ENCODE measurements at regions of chr16 and their contacts with region 1.

Region 1: GRCh38 chr16:69310653-69311532 is at the start of gene VPS4A:
- DNase-seq: peak; percentile 97
- ATAC-seq: peak; percentile 98
- H3K4me3 ChIP-seq: peak within 1 kb of the TSS; percentile 62 to 89 (median 67)
- H3K4me3 Mint-ChIP-seq: peak within 1 kb of the TSS; percentile 99
- H3K27ac ChIP-seq: peak within 1 kb of the TSS; percentile 75 to 84
- H3K27ac Mint-ChIP-seq: peak within 1 kb of the TSS; percentile 94
- H3K4me1 ChIP-seq: peaks cover 10 to 23% of the 10 kb centered on the region in 2 donors
- H3K4me1 Mint-ChIP-seq: peaks cover 24% of the 10 kb centered on the region
- H3K27me3 ChIP-seq: no peaks in the 10 kb centered on the region
- H3K27me3 Mint-ChIP-seq: no peaks in the 10 kb centered on the region
- CTCF ChIP-seq: peak; percentile 86
- total RNA-seq, gene VPS4A: 41.4 and 43.8 TPM in 2 replicates

Region 2: GRCh38 chr16:68538880-68539701 is 771.8 kb before region 1 on chr16 and contains the start of gene ZFP90:
- CTCF ChIA-PET with region 1: no interaction called
- POLR2A ChIA-PET with region 1: no interaction called
- intact Hi-C with region 1: loop called (anchors 10 kb)
- DNase-seq: peak; percentile 91
- ATAC-seq: peak; percentile 96
- H3K4me3 ChIP-seq: peak within 1 kb of the TSS; percentile 67 to 97 (median 90)
- H3K4me3 Mint-ChIP-seq: peak within 1 kb of the TSS; percentile 95
- H3K27ac ChIP-seq: peak within 1 kb of the TSS; percentile 80 to 82
- H3K27ac Mint-ChIP-seq: peak within 1 kb of the TSS; percentile 97
- H3K4me1 ChIP-seq: peaks cover 8 to 16% of the 10 kb centered on the region in 2 donors
- H3K4me1 Mint-ChIP-seq: peaks cover 15% of the 10 kb centered on the region
- H3K27me3 ChIP-seq: no peaks in the 10 kb centered on the region
- H3K27me3 Mint-ChIP-seq: no peaks in the 10 kb centered on the region
- CTCF ChIP-seq: no peak
- total RNA-seq, gene ZFP90: 30.7 and 36.0 TPM in 2 replicates

Region 3: DNA sequence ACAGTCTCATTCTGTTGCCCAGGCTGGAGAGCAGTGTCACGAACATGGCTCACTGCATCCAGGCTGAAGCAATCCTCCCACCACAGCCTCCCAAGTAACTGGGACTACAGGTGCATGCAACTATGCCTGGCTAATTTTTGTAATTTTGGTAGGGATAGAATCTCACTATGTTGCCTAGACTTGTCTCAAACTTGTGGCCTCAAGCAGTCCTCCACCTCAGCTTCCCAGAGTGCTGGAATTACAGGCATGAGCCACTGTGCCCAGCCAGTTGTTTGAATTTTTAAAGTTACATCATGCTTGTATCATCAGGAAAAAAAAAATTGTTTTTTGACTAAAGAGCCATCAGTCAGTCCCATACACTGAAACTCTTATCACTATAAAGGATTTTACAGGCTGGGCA is 16.8 kb before region 1 on chr16:
- CTCF ChIA-PET with region 1: no interaction called
- POLR2A ChIA-PET with region 1: no interaction called
- intact Hi-C with region 1: no loop called
- DNase-seq: no peak
- ATAC-seq: no peak
- H3K4me3 ChIP-seq: no peak overlapping the region
- H3K4me3 Mint-ChIP-seq: no peak overlapping the region
- H3K27ac ChIP-seq: no peak overlapping the region
- H3K27ac Mint-ChIP-seq: no peak overlapping the region
- H3K4me1 ChIP-seq: no peaks in the 10 kb centered on the region
- H3K4me1 Mint-ChIP-seq: no peaks in the 10 kb centered on the region
- H3K27me3 ChIP-seq: no peaks in the 10 kb centered on the region
- H3K27me3 Mint-ChIP-seq: no peaks in the 10 kb centered on the region
- CTCF ChIP-seq: no peak

Region 4: DNA sequence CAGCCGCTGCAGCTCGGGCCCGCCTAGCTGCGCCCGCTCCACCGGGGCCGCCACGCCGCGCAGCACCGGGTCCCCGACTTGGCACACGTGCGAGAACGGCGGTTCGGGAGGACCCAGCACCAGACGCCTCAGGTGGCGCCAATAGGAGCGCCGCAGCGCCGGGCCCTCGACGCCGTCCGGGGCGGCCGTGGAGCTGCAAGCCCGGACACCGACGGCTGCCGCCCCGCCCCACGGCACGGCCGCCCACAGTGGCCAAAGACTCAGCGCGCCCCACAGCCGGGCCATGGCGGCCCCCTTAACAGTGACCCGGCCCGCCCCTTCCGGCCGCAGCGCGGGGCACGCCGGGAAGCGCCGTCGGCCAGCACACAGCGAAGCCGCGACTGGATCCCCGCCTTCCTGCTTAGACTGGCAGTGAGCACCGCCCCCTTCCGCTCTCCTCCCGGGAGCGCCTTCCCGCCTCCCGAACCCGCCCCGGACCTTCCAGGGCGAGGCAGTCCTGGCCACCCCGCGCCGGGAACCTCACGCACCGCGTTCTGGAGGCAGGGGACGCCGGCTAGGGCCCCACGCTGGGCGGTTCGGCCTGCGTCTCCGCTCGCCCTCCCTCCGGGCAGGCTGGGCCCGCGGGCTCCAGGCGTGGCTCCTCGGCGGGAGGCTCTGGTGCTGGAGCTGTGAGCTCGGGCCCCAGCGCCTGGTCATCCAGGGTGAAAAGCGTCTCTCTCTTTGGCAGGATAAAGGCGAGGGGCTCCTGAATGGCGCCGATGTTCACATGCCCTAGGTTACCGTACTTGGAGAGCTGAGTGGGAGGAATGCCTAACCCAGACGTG is 19.6 kb after region 1 on chr16 and contains the start of gene PDF:
- CTCF ChIA-PET with region 1: interaction called, 5 read pairs
- POLR2A ChIA-PET with region 1: interaction called, 7 read pairs
- intact Hi-C with region 1: loop called (anchors 1 kb)
- DNase-seq: peak; percentile 86
- ATAC-seq: peak; percentile 97
- H3K4me3 ChIP-seq: peak within 1 kb of the TSS; percentile 38 to 88 (median 70)
- H3K4me3 Mint-ChIP-seq: peak within 1 kb of the TSS; percentile 86
- H3K27ac ChIP-seq: peak within 1 kb of the TSS; percentile 41 to 88
- H3K27ac Mint-ChIP-seq: peak within 1 kb of the TSS; percentile 80
- H3K4me1 ChIP-seq: peaks cover 15 to 32% of the 10 kb centered on the region in 2 donors
- H3K4me1 Mint-ChIP-seq: peaks cover 44% of the 10 kb centered on the region
- H3K27me3 ChIP-seq: no peaks in the 10 kb centered on the region
- H3K27me3 Mint-ChIP-seq: no peaks in the 10 kb centered on the region
- CTCF ChIP-seq: no peak
- total RNA-seq, gene PDF: 9.2 and 9.6 TPM in 2 replicates